ENCODE measurements at regions of chr22 and their contacts with region 1.

Region 1: DNA sequence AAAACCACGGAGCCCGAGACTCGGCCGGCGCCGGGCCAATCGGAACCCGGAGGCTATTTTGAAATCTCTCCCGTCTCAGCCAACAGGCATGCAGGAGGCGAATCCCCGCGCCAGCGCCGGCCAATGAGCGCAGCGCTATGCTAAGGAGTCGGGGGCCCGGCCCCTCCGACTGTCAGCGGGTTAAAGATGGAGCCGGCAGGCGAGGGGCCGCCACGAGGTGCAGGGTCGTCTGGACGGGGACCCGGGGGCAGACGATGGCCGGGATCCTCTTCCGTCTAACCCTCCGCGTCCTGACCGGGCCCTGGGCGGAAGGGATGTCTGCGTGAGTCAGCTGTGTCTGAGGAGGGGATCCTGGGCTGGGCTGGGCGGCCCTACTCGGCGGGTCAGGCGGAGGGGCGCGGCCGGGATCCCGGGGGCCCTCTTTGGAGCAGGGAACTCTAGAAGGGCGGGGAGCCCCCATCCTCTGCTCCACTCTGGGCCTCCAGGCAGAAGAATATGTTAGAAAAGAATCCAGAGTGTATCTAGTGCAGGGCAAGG is 10.0 kb downstream of the SDF2L1 start:
- DNase-seq: peak; percentile 88
- H3K4me3 Mint-ChIP-seq: peak overlapping the region; percentile 91
- H3K27ac Mint-ChIP-seq: peak overlapping the region; percentile 89
- H3K4me1 Mint-ChIP-seq: peaks cover 23% of the 10 kb centered on the region
- H3K27me3 Mint-ChIP-seq: no peaks in the 10 kb centered on the region

Region 2: DNA sequence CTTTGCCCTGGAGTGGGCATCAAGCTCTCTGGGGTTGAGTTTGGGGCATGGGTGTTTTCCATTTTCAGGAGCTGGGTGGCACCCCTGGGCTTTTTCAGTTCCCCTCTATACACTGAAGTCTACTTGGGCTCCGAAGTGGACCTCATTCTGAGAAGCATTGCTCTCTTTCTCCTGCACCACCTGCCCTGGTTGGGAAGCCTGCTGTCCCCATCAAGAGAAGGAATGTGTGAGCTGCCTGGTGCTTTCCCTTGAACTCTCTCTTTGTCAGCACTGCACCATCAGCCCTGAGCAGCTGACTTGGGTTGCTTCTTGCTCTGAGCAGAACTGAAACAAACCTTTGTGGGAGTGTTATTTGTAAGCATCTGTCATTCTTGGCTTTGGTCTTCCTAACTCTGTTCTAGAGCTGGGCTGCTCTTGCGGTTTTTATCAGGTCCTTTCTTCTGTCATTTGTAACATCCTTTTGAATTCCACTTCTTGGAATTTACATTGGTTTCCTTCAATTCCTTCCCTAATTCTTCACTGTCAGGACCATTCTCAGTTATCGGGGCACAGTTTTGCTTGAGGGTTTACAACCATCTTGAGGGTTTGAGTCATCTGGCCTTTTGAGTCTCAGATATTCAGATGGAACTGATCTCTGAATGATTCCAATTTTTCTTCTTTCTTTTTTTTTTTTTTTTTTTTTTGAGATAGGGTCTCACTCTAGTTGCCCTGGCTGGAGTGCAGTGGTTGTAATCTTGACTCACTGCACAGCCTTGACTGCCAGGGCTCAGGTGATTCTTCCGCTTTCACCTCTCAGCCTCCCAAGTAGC is 64.1 kb before region 1 on chr22:
- intact Hi-C with region 1: loop called (anchors 5 kb)
- DNase-seq: no peak
- H3K4me3 Mint-ChIP-seq: no peak overlapping the region
- H3K27ac Mint-ChIP-seq: peak overlapping the region; percentile 75
- H3K4me1 Mint-ChIP-seq: peaks cover 18% of the 10 kb centered on the region
- H3K27me3 Mint-ChIP-seq: no peaks in the 10 kb centered on the region

Region 3: DNA sequence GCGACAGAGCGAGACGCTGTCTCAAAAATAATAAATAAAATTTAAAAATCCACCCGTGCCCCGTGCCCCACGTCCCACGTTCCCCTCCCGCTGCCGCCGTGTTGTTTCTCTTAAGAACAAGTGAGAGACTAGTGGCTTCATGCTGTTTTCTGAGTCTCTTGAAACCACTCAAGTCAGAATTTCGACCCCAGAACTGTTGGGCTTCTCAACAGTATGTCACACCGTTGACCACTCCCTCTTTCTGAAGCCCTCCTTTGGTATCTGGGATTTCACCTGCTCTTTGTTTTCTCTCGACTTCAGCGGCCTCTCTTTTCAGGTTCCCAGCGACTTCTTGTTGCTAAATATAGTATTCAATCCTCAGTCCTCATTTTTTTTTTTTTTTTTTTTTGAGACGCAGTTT is 14.7 kb after region 1 on chr22:
- intact Hi-C with region 1: loop called (anchors 1 kb)
- DNase-seq: no peak
- H3K4me3 Mint-ChIP-seq: peak overlapping the region; percentile 98
- H3K27ac Mint-ChIP-seq: peak overlapping the region; percentile 95
- H3K4me1 Mint-ChIP-seq: peaks cover 15% of the 10 kb centered on the region
- H3K27me3 Mint-ChIP-seq: no peaks in the 10 kb centered on the region

Measured in activated T-helper 2 cell treated with anti-CD3 and anti-CD28 coated beads, Interferon-gamma antibody, Interleukin-2, Interleukin-4, amounts not matched to agents 10 μg/mL and 5 μg/mL and 100 μg/mL, durations not matched to agents 14 hours and 24 hours and 36 hours (primary cell).